Esophagus muscularis mucosa (tissue), 4 donors: ENCODE measurements at regions of chr1 and their contacts with region 1.

Region 1: DNA sequence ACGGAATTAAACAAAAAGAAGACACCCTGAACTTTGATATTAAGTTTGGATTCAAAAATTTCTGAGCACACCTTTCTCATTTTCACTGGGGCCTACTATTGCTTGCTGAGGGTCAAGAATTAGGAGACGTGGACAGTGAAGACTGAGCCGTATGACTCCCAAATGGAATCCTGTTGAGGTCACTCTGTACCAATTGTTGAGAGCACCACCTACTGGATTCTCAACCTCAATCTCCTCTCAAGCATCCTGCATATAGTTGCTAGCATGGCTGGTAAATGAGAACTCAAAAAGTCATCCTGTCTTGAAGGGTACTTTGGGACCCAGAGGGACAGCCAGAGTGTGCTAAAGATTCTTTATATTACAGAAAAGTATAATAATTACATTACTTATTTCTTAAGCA is 20.2 kb upstream of the MTR start:
- DNase-seq: no peak
- H3K4me3 ChIP-seq: no peak overlapping the region
- H3K27ac ChIP-seq: no peak overlapping the region
- H3K4me1 ChIP-seq: no peaks in the 10 kb centered on the region
- H3K27me3 ChIP-seq: no peaks in the 10 kb centered on the region
- CTCF ChIP-seq: peak; percentile 29 to 48 (median 44)
- EP300 ChIP-seq: no peak
- POLR2A ChIP-seq: no peak

Region 2: DNA sequence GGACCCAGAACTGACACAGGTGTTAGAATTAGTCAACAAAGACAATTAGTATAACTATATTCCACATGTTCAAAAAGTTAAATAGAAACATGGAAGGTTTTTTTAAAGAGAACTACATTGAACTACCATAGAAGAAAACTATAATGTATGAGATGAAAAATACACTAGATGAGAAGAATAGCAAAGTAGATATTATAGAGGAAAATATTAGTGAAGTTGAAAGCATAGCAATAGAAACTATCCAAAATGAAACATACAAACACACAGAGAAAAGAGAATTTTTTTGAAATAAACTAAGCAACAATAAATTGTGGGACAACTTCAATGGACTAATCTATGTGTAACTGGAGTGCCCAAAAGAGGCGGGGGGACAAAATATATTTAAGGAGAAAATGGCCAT is 162.6 kb before region 1 on chr1:
- intact Hi-C with region 1: loop called (anchors 5 kb)
- DNase-seq: no peak
- H3K4me3 ChIP-seq: no peak overlapping the region
- H3K27ac ChIP-seq: no peak overlapping the region
- H3K4me1 ChIP-seq: no peaks in the 10 kb centered on the region
- H3K27me3 ChIP-seq: peaks cover 0 to 12% (median 0%) of the 10 kb centered on the region in 4 donors
- CTCF ChIP-seq: no peak
- EP300 ChIP-seq: no peak
- POLR2A ChIP-seq: no peak

Region 3: DNA sequence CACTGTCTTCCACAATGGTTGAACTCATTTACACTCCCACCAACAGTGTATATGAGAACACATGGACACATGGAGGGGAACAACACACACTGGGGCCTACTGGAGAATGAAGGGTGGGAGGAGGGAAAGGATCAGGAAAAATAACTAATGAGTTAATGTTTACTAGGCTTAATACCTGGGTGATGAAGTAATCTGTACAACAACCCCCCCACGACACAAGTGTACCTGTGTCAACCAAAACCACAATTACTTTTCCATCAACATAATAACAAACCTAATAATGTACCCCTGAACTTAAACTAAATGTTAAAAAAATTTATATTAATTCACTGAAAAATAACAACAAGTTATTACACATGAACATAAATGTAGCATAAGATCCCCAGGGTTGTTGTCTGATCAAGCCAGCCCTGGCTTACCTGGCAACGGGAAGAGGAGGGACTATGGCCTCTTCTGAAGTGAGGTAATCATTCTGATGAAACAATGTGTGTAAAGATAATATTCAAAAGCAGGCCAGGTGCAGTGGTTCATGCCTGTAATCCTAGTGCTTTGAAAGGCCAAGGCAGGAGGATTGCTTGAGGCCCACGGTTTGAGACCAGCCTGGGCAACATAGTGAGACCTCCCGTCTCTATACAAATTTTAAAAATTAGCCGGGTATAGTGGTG is 129.8 kb before region 1 on chr1:
- intact Hi-C with region 1: no loop called
- DNase-seq: no peak
- H3K4me3 ChIP-seq: no peak overlapping the region
- H3K27ac ChIP-seq: no peak overlapping the region
- H3K4me1 ChIP-seq: peaks cover 0 to 1% (median under 1%) of the 10 kb centered on the region in 4 donors
- H3K27me3 ChIP-seq: no peaks in the 10 kb centered on the region
- CTCF ChIP-seq: no peak
- EP300 ChIP-seq: no peak
- POLR2A ChIP-seq: no peak

Region 4: DNA sequence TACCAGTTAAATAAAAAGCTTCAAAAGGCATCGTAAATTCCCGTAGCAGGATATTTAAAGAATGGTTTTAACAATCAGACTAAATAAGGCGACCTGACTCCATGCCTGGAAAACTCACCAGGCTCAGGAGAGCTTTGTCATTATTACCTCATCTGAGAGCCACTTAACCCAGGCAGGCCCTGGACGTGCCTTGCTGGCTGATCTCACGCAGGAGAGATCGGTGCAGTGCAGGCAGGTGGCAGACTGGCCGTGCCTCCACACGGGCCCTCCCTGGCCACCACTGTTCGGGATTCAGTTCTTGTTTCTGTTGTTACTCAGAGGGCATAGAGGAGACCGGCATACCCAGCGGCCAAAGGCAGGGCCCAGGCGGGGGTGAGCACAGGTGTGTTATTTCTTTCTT is 223.0 kb after region 1 on chr1:
- intact Hi-C with region 1: no loop called
- DNase-seq: peak; percentile 91
- H3K4me3 ChIP-seq: no peak overlapping the region
- H3K27ac ChIP-seq: peak overlapping the region; percentile 52 to 70 (median 60)
- H3K4me1 ChIP-seq: peaks cover 0 to 18% (median 9%) of the 10 kb centered on the region in 4 donors
- H3K27me3 ChIP-seq: no peaks in the 10 kb centered on the region
- CTCF ChIP-seq: peak; percentile 3 to 20 (median 8)
- EP300 ChIP-seq: no peak
- POLR2A ChIP-seq: no peak

Region 5: DNA sequence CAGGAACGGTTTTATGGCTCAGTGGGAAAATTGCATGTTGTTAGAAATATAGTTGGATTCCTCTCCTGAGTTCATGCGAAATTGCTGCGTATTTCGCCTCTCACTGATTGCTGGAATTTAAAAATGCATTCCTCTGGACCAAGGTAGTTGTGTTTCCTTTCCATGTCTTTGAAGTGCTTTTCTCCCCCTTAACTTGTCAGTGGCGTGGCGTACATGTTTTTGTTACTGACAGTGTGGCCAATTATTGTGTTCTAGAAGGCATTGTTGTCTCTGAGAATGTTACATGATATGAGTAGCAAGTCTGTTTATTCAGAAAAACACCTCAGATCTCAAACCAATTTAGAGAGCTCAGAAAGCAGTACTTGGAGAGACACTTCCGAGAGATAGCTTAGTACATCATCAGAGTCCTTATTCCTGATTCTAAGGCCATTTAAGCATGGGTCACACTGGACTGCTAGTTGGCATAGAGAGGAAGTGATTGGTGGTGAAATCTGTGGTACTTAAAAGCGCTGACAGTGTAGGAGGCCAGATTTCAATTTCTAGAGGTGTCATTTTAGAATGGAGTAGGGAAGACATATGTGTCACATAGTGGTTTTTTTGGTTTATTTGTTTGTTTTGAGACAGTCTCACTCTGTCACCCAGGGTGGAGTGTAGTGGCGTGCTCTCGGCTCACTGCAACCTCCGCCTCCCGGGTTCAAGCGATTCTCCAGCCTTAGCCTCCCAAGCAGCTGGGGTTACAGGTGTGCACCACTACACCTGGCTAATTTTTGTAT is 451.4 kb after region 1 on chr1:
- intact Hi-C with region 1: no loop called
- DNase-seq: no peak
- H3K4me3 ChIP-seq: no peak overlapping the region
- H3K27ac ChIP-seq: no peak overlapping the region
- H3K4me1 ChIP-seq: peaks cover 25 to 43% (median 33%) of the 10 kb centered on the region in 4 donors
- H3K27me3 ChIP-seq: no peaks in the 10 kb centered on the region
- CTCF ChIP-seq: no peak
- EP300 ChIP-seq: no peak
- POLR2A ChIP-seq: no peak